Activated T-helper 1 cell treated with anti-CD3 and anti-CD28 coated beads, Interleukin-12 subunit alpha, Interleukin-12 subunit beta, Interleukin-2, Interleukin-4 antibody, amounts not matched to agents 30 ng/mL and 10 ng/mL and 1 ng/mL, durations not matched to agents 14 hours and 24 hours and 36 hours (primary cell): ENCODE measurements at regions of chr5 and their contacts with region 1.

Region 1: DNA sequence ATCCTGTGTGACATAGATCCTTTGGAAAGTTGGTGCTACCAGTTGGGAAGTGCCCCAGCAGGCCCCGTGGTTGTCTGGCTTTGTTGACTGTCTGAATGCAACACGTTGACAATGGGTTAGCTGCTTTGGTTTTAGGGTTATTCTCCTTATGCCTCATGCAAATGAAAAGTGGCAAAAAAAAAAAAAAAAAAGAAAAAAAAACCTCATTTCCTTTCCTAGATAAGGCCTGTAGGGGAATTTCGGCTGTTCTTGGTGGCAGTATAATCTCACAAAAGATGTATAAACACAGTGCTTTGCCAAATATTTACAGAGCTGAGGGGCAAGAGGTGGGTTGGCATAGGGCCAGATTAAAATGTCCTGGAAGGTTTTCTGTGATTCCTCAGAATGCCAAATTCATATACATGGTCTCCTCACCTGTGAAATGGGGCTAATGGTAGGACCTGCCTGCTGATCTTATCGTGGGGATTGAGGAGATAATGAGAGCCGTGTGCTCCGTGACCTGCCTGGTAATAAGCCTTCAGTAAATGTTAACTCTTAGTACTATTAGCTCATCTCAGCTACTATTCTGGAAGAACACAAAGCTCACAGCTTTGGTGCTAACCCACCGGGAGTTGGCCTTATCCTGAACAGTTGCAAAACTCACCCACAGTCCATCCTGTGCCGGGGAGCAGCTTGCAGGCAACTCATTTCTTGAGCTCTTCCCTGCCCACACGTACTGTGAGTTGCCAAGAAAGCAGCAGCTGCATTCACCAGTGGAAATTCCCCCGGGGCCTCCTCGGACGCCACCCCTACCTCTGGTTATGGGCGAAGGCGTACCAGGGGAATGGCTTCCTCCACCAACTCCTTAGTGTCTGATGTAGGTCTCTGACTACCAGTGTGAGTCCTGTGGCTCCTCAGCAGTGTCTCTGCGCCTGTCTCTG is 220.3 kb downstream of the NR3C1 start:
- DNase-seq: peak; percentile 68
- H3K4me3 Mint-ChIP-seq: peak overlapping the region; percentile 29
- H3K27ac Mint-ChIP-seq: peak overlapping the region; percentile 93
- H3K4me1 Mint-ChIP-seq: peaks cover 77% of the 10 kb centered on the region
- H3K27me3 Mint-ChIP-seq: no peaks in the 10 kb centered on the region

Region 2: DNA sequence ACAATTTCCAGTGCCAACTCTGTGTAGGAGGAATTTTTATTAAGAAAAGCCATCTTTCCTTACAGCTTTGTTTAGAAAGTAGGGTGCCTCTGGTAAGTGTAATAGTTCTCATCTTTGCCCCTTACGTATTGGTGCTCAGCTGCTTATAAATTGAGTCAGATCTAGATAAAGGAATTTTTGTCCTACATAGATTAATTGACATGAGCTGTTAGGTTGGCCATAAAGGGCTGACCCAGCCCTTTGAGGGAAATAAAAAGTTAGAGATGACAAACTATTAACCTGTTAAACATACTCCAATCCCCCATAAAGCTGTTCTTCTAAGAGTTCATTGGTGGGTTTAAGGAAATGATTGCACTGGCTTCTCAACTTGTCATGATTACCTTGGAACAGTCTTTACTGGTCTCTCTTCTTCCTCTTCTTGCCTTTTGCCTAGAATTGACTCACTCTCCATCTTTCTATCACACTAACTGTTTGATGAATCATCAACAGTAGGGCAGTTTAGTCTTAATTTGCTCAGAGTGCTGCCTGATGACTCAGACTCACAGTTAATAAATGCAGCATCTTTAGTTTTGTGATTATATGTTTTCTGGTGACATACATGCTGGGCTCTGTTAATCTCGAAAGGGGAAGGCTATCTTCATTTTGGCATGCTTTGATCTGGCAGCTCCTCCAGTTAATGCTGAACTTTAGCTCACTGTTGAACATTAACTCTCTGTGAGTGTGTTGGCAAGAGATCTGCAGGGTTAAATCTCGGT is 361.3 kb before region 1 on chr5:
- intact Hi-C with region 1: loop called (anchors 5 kb)
- DNase-seq: no peak
- H3K4me3 Mint-ChIP-seq: no peak overlapping the region
- H3K27ac Mint-ChIP-seq: peak overlapping the region; percentile 16
- H3K4me1 Mint-ChIP-seq: peaks cover 79% of the 10 kb centered on the region
- H3K27me3 Mint-ChIP-seq: no peaks in the 10 kb centered on the region

Region 3: GRCh38 chr5:143023411-143024096 is 159.6 kb before region 1 on chr5:
- intact Hi-C with region 1: loop called (anchors 1 kb)
- DNase-seq: peak; percentile 50
- H3K4me3 Mint-ChIP-seq: peak overlapping the region; percentile 4
- H3K27ac Mint-ChIP-seq: peak overlapping the region; percentile 45
- H3K4me1 Mint-ChIP-seq: peaks cover 67% of the 10 kb centered on the region
- H3K27me3 Mint-ChIP-seq: peaks cover 4% of the 10 kb centered on the region

Region 4: DNA sequence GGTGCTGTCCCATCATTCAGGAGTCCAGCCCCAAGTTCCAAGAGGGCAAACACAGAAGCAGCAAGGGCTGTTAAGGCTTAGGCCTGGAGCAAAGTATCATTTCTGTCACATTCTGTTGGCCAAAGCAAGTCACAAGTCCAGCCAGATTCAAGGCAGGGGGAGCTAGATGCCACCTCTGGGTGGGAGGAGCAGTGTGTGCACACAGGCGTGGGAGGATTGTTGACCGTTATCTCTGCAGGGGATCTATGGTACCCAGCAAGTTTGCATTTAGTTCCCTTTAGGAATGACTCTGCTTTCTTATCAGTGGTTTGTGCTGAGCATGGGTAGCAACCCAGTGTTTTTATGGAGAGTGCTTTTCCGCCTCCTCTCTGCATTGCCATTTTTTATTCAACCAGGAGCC is 58.6 kb before region 1 on chr5:
- intact Hi-C with region 1: loop called (anchors 1 kb)
- DNase-seq: no peak
- H3K4me3 Mint-ChIP-seq: no peak overlapping the region
- H3K27ac Mint-ChIP-seq: peak overlapping the region; percentile 32
- H3K4me1 Mint-ChIP-seq: peaks cover 55% of the 10 kb centered on the region
- H3K27me3 Mint-ChIP-seq: peaks cover 1% of the 10 kb centered on the region

Region 5: GRCh38 chr5:143262393-143263174 is 79.4 kb after region 1 on chr5:
- intact Hi-C with region 1: loop called (anchors 2 kb)
- DNase-seq: no peak
- H3K4me3 Mint-ChIP-seq: no peak overlapping the region
- H3K27ac Mint-ChIP-seq: no peak overlapping the region
- H3K4me1 Mint-ChIP-seq: peaks cover 21% of the 10 kb centered on the region
- H3K27me3 Mint-ChIP-seq: no peaks in the 10 kb centered on the region

Region 6: DNA sequence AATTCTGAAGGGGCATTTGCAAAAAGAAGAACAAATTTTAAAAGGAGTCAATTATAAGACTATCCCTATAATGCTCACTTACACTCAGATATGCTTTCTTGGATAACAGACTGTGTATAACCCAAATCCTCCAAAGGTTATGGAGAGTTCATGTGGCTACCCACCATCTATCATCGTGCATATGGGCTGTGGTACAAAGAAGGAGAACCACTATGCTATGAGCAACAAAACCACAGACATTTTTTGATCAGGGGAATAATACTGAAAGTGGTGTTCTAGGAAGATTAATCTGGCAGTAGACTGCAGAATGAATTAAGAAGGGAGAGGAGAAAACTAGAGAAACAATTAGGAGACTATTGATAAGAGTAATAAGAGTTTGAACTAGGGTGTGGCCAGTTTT is 203.6 kb after region 1 on chr5:
- intact Hi-C with region 1: no loop called
- DNase-seq: no peak
- H3K4me3 Mint-ChIP-seq: no peak overlapping the region
- H3K27ac Mint-ChIP-seq: peak overlapping the region; percentile 12
- H3K4me1 Mint-ChIP-seq: peaks cover 44% of the 10 kb centered on the region
- H3K27me3 Mint-ChIP-seq: no peaks in the 10 kb centered on the region

Region 7: DNA sequence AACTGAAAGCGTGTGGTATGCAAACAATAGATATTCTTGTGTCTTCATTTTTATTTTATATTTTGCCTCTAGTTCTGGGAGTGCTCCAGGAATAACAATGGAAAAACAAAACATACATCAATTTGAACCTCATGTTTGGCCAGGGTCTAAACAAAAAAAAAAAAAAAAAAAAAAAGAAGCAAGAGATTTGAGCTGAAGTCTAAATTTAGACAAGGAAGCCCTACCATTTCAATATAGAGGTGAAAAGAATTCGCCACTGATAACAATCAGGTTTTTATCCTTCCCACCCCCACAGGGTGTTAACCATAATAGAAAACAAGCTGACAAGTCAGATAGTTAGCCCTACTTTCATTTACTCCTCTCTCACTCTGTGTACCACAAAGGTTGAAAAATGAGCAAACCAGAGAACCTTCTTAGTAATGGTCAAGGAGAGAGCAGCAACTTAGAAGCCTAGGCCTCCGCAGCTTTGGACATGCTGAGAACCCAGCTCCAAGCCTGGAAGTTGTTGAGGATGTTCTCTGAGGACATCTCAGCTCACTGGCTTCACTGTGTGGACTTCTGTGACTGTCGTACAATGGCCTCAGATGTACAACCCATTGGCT is 510.6 kb after region 1 on chr5:
- intact Hi-C with region 1: loop called (anchors 10 kb)
- DNase-seq: no peak
- H3K4me3 Mint-ChIP-seq: no peak overlapping the region
- H3K27ac Mint-ChIP-seq: peak overlapping the region; percentile 58
- H3K4me1 Mint-ChIP-seq: peaks cover 44% of the 10 kb centered on the region
- H3K27me3 Mint-ChIP-seq: no peaks in the 10 kb centered on the region